ENCODE measurements at regions of chr4 and their contacts with region 1.

Region 1: GRCh38 chr4:98341309-98341708 is 80.1 kb downstream of the RAP1GDS1 start:
- DNase-seq: no peak

Region 2: GRCh38 chr4:98363431-98363830 is 22.1 kb after region 1 on chr4:
- intact Hi-C with region 1: no loop called
- DNase-seq: no peak

Region 3: DNA sequence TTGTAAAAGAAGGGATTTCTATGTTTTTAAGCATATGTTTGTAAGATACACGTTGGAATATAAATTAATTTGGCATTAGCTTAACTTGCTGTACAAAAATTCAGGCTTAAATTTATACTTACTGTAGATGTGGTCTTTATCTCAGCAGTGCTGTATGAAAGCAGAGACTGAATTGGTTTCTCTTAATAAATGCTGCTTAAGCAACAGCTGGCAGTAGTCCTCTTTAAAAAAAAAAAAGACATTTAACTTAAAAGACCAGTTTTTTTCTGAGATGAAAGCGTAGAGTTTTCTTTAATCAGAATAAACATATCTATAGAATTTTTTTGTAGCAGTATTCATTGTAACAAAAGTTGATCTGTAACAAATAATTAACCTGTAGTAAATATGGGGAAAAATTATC is 44.5 kb after region 1 on chr4:
- intact Hi-C with region 1: loop called in 1 of 2 experiments (anchors 2 kb)
- DNase-seq: no peak

Measured in posterior vena cava (tissue), 2 donors.